ENCODE measurements at regions of chr14 and their contacts with region 1.

Region 1: DNA sequence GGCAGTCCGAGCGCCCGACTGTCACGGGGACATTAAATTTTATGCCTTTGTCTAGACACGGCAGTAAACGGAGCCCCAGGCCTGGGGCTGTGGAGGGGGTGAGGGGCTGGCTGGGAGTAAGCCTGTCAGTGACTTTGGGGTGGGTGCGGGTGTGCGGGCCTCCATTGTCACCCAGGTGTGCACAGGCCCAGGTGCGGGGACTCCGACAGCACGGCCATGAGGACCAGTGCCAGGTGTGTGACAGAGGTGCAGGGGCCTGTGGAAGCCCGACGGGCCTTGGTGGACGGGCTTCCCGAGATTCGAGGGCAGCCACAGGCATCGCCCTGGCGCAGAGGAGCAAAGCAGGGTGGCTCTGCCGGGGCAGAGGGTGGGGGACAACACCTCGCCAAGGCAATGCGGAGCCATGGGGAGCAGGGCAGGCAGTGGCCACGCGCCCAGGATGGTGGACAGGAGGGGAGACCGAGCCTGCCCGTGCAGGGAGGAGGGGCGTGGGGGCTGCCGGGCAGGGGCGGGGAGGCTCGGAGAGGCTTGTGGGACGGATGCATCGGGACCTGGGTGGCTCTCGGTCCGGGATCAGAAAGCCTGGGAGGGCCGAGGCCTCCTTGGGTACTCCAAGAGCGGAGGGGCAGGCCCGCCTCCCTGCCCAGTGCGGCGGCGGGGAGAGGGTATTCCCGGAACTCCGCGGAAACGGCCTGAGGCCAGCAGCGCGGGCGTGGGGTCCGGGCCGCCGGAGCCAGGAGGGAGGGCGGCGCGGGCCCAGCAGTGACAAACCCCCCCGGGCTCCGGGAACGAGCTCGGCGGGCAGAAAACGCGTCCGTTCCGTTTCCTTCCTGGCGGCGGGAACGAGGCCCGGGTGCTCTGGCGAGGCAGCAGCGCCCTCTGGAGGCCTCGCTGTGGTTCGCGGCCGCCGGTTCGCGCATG is 1.5 kb downstream of the TMEM121 start:
- DNase-seq: peak; percentile 78 to 82 (median 79)
- ATAC-seq: peak; percentile 80 to 91 (median 84)
- H3K4me3 ChIP-seq: peak overlapping the region; percentile 43 to 69 (median 67)
- H3K27ac ChIP-seq: peak overlapping the region in 1 of 3 donors; percentile 31
- H3K4me1 ChIP-seq: peaks cover 0 to 17% (median 0%) of the 10 kb centered on the region in 4 donors
- H3K27me3 ChIP-seq: no peaks in the 10 kb centered on the region
- CTCF ChIP-seq: peak; percentile 85 to 94 (median 88)
- POLR2A ChIP-seq: peak; percentile 43

Region 2: GRCh38 chr14:105366386-105367074 is 161.4 kb before region 1 on chr14:
- intact Hi-C with region 1: loop called (anchors 5 to 10 kb)
- DNase-seq: no peak
- ATAC-seq: no peak
- H3K4me3 ChIP-seq: no peak overlapping the region
- H3K27ac ChIP-seq: no peak overlapping the region
- H3K4me1 ChIP-seq: no peaks in the 10 kb centered on the region
- H3K27me3 ChIP-seq: no peaks in the 10 kb centered on the region
- CTCF ChIP-seq: no peak
- POLR2A ChIP-seq: no peak

Region 3: DNA sequence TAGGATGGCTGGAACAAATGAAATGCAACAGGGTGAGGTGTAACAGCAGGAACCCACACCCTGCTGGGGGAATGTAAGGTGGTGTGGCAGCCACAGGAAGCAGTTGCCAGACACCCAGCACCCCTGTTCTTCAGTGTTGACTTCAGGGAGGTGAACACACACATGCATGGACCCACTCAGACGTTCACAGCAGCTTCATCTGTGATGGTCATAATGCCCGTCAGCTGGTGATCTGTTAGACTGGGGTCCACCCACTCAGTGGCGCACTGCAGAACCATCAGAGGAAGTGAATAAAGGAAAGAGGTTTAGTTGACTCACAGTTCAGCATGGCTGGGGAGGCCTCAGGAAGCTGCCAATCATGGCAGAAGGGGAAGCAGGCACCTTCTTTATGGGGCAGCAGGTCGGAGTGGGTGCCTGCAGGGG is 152.3 kb before region 1 on chr14:
- intact Hi-C with region 1: loop called in 1 of 2 experiments (anchors 10 kb)
- DNase-seq: no peak
- ATAC-seq: no peak
- H3K4me3 ChIP-seq: no peak overlapping the region
- H3K27ac ChIP-seq: no peak overlapping the region
- H3K4me1 ChIP-seq: no peaks in the 10 kb centered on the region
- H3K27me3 ChIP-seq: no peaks in the 10 kb centered on the region
- CTCF ChIP-seq: no peak
- POLR2A ChIP-seq: no peak

Region 4: DNA sequence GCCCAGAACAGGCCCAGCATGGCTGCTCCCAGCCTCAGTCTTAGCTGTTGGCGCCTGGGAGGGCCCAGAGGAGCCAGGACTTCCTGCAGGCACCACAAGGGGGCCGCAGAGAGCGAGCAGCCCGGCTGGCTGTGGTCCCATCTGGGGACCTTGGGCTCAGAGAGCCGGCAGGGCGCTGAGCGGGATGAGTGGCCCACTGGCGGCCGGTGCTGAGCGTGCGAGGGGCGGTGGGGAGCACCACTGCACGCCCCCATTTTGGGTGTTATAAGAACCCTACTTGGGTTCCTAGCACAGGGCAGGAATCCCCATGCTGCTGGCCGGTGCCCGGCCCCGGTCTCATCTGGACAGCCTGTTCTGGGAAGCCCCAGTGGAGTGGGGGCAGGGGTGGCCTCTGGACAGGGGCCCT is 79.2 kb before region 1 on chr14:
- intact Hi-C with region 1: no loop called
- DNase-seq: peak; percentile 67 to 76 (median 70)
- ATAC-seq: peak; percentile 83 to 93 (median 90)
- H3K4me3 ChIP-seq: no peak overlapping the region
- H3K27ac ChIP-seq: no peak overlapping the region
- H3K4me1 ChIP-seq: no peaks in the 10 kb centered on the region
- H3K27me3 ChIP-seq: no peaks in the 10 kb centered on the region
- CTCF ChIP-seq: peak; percentile 79 to 91 (median 83)
- POLR2A ChIP-seq: no peak